ENCODE measurements at regions of chr10 and their contacts with region 1.

Region 1: GRCh38 chr10:124647421-124648130 is 96.6 kb downstream of the FAM53B start:
- DNase-seq: peak; percentile 64 to 86 (median 66)
- H3K4me3 ChIP-seq: peak overlapping the region; percentile 41
- H3K4me3 Mint-ChIP-seq: peak overlapping the region; percentile 75 to 95 (median 84)
- H3K27ac ChIP-seq: peak overlapping the region; percentile 75
- H3K27ac Mint-ChIP-seq: peak overlapping the region; percentile 96 to 100 (median 98)
- H3K4me1 ChIP-seq: peaks cover 90% of the 10 kb centered on the region
- H3K4me1 Mint-ChIP-seq: peaks cover 92 to 100% (median 94%) of the 10 kb centered on the region in 3 donors
- H3K27me3 ChIP-seq: no peaks in the 10 kb centered on the region
- H3K27me3 Mint-ChIP-seq: no peaks in the 10 kb centered on the region

Region 2: DNA sequence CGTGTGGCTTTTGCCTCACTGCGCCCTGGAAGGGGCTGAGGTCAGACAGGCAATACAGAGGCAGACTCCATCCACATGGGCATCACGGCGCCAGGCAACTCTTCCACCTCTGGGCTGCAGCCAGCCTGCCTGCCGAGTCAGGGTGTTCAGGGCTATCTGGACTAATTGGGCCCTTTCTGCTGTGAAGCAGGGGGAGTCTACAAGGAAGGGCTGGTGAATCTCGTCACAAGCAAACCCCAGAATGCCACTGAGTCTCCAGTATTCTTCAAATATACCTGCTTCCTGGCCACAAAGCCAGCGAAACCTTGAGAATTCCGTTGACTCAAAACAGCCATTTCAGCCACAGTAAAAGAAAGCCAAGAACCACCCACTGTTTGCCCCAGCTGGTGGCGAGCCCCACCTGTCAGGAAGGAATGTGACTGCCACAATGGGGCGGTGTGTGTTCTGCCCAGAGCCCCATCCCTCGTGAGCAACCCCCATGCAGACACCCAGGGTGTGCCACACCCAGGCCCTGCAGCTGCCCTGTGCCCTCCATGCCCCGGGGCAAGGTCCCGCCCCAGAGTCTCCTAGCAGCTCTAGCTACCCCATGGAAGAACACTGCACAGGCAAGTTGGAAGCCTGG is 20.7 kb before region 1 on chr10:
- CTCF ChIA-PET with region 1: interaction called, 13 read pairs
- POLR2A ChIA-PET with region 1: interaction called, 3 read pairs
- DNase-seq: peak in 4 of 5 donors; percentile 14 to 68 (median 39)
- H3K4me3 ChIP-seq: peak overlapping the region; percentile 37
- H3K4me3 Mint-ChIP-seq: peak overlapping the region in 6 of 7 donors; percentile 43 to 73 (median 67)
- H3K27ac ChIP-seq: no peak overlapping the region
- H3K27ac Mint-ChIP-seq: peak overlapping the region; percentile 78 to 95 (median 90)
- H3K4me1 ChIP-seq: peaks cover 53% of the 10 kb centered on the region
- H3K4me1 Mint-ChIP-seq: peaks cover 55 to 80% (median 61%) of the 10 kb centered on the region in 3 donors
- H3K27me3 ChIP-seq: no peaks in the 10 kb centered on the region
- H3K27me3 Mint-ChIP-seq: no peaks in the 10 kb centered on the region

Region 3: GRCh38 chr10:124657806-124658205 is 10.2 kb after region 1 on chr10:
- CTCF ChIA-PET with region 1: interaction called, 42 read pairs
- POLR2A ChIA-PET with region 1: interaction called, 34 read pairs
- DNase-seq: peak in 4 of 5 donors; percentile 39 to 77 (median 65)
- H3K4me3 ChIP-seq: no peak overlapping the region
- H3K4me3 Mint-ChIP-seq: peak overlapping the region; percentile 41 to 90 (median 80)
- H3K27ac ChIP-seq: peak overlapping the region; percentile 79
- H3K27ac Mint-ChIP-seq: peak overlapping the region; percentile 91 to 99 (median 97)
- H3K4me1 ChIP-seq: peaks cover 89% of the 10 kb centered on the region
- H3K4me1 Mint-ChIP-seq: peaks cover 87 to 95% (median 88%) of the 10 kb centered on the region in 3 donors
- H3K27me3 ChIP-seq: no peaks in the 10 kb centered on the region
- H3K27me3 Mint-ChIP-seq: peaks cover 0 to 2% of the 10 kb centered on the region in 2 donors

Region 4: GRCh38 chr10:124677749-124678556 is 30.4 kb after region 1 on chr10:
- CTCF ChIA-PET with region 1: interaction called, 29 read pairs
- POLR2A ChIA-PET with region 1: interaction called, 9 read pairs
- DNase-seq: no peak
- H3K4me3 ChIP-seq: peak overlapping the region; percentile 11
- H3K4me3 Mint-ChIP-seq: peak overlapping the region; percentile 69 to 88 (median 82)
- H3K27ac ChIP-seq: no peak overlapping the region
- H3K27ac Mint-ChIP-seq: peak overlapping the region; percentile 72 to 96 (median 92)
- H3K4me1 ChIP-seq: peaks cover 96% of the 10 kb centered on the region
- H3K4me1 Mint-ChIP-seq: peaks cover 83 to 97% (median 92%) of the 10 kb centered on the region in 3 donors
- H3K27me3 ChIP-seq: no peaks in the 10 kb centered on the region
- H3K27me3 Mint-ChIP-seq: peaks cover 0 to 2% of the 10 kb centered on the region in 2 donors

Region 5: DNA sequence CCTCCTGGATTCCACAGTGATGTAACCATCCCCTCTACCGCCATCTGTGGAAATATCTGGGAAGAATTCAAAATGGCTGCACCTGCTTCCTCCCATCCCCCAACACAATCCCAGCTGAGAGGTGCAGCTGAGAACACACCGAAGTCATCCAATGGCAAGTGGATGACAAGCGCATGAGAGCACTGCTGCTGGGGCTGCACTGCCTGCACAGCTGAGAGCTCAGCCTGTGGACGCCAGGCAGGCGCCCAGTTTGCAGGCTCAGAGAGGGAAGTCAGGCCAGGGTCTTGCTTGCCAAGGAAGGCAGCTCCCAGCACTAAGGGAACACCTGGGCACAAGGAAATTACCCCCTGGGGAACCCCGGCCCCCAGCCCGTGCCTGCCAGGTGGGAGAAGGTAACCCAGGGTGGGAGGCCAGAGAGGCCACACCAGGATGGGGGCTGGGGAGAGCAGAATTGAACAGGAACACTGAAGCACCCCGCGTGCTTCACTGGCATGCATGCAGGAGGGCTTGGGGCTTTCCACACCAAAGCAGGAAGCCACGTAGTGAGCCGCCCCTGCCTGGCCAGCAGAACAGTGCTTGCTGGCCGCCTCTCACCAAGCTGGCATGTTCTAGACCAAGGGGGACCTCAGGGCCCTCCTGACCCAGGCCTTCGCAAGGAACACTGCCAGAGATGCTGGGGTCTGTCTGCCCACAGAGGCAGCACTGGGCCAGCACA is 50.4 kb after region 1 on chr10:
- CTCF ChIA-PET with region 1: interaction called, 12 read pairs
- POLR2A ChIA-PET with region 1: interaction called, 3 read pairs
- DNase-seq: peak in 4 of 5 donors; percentile 39 to 72 (median 42)
- H3K4me3 ChIP-seq: peak overlapping the region; percentile 36
- H3K4me3 Mint-ChIP-seq: peak overlapping the region in 6 of 7 donors; percentile 79 to 87 (median 82)
- H3K27ac ChIP-seq: peak overlapping the region; percentile 59
- H3K27ac Mint-ChIP-seq: peak overlapping the region; percentile 93 to 99 (median 98)
- H3K4me1 ChIP-seq: peaks cover 95% of the 10 kb centered on the region
- H3K4me1 Mint-ChIP-seq: peaks cover 95 to 100% (median 99%) of the 10 kb centered on the region in 3 donors
- H3K27me3 ChIP-seq: no peaks in the 10 kb centered on the region
- H3K27me3 Mint-ChIP-seq: no peaks in the 10 kb centered on the region